PC-9 (cell line): ENCODE measurements at regions of chr12 and their contacts with region 1.

Region 1: DNA sequence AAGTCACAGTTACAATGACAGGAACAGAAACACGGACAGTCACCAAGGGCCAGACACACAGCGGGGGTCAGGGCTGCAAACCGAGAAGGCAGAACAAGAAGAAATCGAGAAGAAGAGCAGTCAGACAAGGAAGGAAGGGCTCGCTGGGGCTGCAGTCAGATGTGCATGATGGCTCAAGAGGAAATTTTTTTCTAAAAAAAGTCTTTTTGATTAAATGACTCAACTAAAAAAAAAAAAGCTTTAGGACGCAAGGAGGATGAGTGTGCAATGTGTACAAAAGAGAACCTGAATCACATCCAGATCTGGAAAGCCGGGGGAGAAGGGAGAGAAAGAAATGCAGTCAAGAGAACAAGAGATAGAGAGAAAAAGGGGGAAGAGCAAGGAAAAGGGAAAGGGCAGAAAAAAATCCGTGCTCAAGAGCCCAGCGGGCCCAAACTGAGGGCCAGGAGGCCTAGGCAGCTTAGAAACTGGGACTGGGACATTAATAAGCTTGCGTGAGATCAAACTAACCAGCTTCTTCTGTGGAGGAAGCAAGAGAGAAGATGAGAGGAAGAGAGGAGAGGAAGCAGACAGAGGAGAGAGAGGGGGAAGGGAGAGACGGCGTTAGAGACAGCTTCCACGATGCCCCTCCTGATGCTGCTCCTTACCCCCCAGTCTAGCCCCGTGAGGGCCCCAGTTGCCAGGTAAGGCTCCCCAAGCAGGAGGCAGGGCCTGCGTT is 6.7 kb downstream of the IFFO1 start:
- DNase-seq: no peak
- H3K4me3 ChIP-seq: no peak overlapping the region
- H3K27ac ChIP-seq: no peak overlapping the region
- H3K4me1 ChIP-seq: no peaks in the 10 kb centered on the region
- H3K27me3 ChIP-seq: no peaks in the 10 kb centered on the region
- CTCF ChIP-seq: no peak

Region 2: GRCh38 chr12:6306615-6307220 is 242.4 kb before region 1 on chr12:
- CTCF ChIA-PET with region 1: interaction called, 7 read pairs
- POLR2A ChIA-PET with region 1: interaction called, 27 read pairs
- intact Hi-C with region 1: no loop called
- DNase-seq: peak; percentile 52 to 69
- H3K4me3 ChIP-seq: no peak overlapping the region
- H3K27ac ChIP-seq: no peak overlapping the region
- H3K4me1 ChIP-seq: peaks cover 34% of the 10 kb centered on the region
- H3K27me3 ChIP-seq: no peaks in the 10 kb centered on the region
- CTCF ChIP-seq: no peak

Region 3: DNA sequence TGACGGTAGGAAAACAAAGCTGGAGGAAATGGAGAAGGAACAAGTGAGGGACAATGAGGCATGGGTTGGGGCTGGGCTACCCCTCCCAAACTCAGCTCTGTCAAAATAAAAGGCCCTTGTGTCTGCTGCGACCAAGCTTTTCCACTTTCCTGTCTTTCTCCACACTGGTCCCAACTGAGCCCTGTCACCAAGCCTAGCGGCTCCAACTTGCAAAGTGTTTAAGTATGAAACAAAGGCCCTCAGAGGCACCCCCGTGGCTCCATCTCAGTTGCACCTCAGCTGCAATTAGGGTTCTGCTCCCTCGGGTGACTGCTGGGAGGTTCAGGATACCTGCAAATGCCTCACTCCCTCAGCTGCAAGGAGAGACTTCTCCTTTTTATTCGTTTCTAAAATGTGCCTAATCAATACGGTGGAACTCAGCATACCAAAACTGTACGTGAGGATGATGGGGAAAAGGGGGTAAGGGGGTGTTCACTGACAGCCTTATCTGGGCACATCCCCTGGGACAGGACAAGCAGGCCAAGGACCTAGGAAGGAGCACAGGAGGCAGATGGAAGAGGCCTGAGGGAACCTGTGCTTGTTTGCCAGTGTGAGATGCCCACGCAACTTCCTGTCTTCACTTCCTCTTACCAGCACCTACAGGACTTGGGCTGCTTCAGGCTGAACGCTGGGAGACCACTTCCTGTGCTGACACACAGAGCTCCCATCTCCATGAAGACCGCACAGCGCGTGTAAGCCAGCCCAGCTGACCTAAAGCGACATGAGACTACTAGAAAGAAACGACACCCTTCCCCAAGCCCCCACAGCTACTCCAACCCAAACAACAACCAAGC is 87.5 kb before region 1 on chr12:
- CTCF ChIA-PET with region 1: no interaction called
- POLR2A ChIA-PET with region 1: interaction called, 15 read pairs
- intact Hi-C with region 1: no loop called
- DNase-seq: no peak
- H3K4me3 ChIP-seq: no peak overlapping the region
- H3K27ac ChIP-seq: no peak overlapping the region
- H3K4me1 ChIP-seq: no peaks in the 10 kb centered on the region
- H3K27me3 ChIP-seq: no peaks in the 10 kb centered on the region
- CTCF ChIP-seq: no peak